Naive thymus-derived CD4-positive, alpha-beta T cell (primary cell): ENCODE measurements at regions of chr3 and their contacts with region 1.

Region 1: GRCh38 chr3:72756900-72757299 is 91.3 kb downstream of the SHQ1 start:
- DNase-seq: peak in 8 of 9 donors; percentile 24 to 87 (median 83)
- ATAC-seq: peak; percentile 98
- H3K4me3 ChIP-seq: peak overlapping the region; percentile 37
- H3K4me3 Mint-ChIP-seq: peak overlapping the region; percentile 51 to 84 (median 76)
- H3K27ac ChIP-seq: peak overlapping the region; percentile 68
- H3K27ac Mint-ChIP-seq: peak overlapping the region; percentile 86 to 99 (median 97)
- H3K4me1 ChIP-seq: peaks cover 17 to 49% of the 10 kb centered on the region in 2 donors
- H3K4me1 Mint-ChIP-seq: peaks cover 28 to 89% (median 80%) of the 10 kb centered on the region in 7 donors
- H3K27me3 ChIP-seq: no peaks in the 10 kb centered on the region
- H3K27me3 Mint-ChIP-seq: no peaks in the 10 kb centered on the region

Region 2: DNA sequence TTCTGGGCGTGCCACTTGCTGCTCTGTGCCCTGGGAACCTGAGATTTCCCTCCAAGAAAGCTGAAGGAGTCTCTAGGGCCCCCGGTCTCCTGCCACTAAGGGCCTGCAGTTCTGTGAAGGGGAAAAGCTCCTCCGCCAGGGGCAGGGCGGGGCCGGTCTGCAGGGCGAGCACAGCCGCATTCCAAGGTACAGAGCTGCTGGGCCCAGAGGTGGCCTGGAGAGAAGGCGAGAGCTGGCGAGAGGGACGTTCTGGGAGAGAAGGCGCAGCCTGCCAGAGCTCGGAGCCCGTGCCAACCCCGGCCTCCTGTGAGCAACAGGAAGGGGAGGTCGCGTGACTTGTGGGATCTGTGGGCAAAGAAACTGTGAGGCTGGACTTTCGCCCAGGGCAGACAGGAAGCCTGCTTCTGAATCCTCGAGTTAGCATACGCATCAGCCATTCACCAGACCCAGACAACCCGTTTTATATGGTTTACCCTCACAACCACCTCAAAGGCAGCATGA is 409.0 kb before region 1 on chr3:
- CTCF ChIA-PET with region 1: no interaction called
- POLR2A ChIA-PET with region 1: no interaction called
- intact Hi-C with region 1: loop called in 1 of 2 experiments (anchors 10 kb)
- DNase-seq: peak in 5 of 9 donors; percentile 37 to 44 (median 41)
- ATAC-seq: peak; percentile 44
- H3K4me3 ChIP-seq: no peak overlapping the region
- H3K4me3 Mint-ChIP-seq: peak overlapping the region in 7 of 10 donors; percentile 11 to 71 (median 60)
- H3K27ac ChIP-seq: peak overlapping the region; percentile 22
- H3K27ac Mint-ChIP-seq: peak overlapping the region in 8 of 9 donors; percentile 70 to 90 (median 86)
- H3K4me1 ChIP-seq: peaks cover 3 to 63% of the 10 kb centered on the region in 2 donors
- H3K4me1 Mint-ChIP-seq: peaks cover 37 to 69% (median 64%) of the 10 kb centered on the region in 7 donors
- H3K27me3 ChIP-seq: no peaks in the 10 kb centered on the region
- H3K27me3 Mint-ChIP-seq: peaks cover 0 to 12% (median 0%) of the 10 kb centered on the region in 5 donors

Region 3: DNA sequence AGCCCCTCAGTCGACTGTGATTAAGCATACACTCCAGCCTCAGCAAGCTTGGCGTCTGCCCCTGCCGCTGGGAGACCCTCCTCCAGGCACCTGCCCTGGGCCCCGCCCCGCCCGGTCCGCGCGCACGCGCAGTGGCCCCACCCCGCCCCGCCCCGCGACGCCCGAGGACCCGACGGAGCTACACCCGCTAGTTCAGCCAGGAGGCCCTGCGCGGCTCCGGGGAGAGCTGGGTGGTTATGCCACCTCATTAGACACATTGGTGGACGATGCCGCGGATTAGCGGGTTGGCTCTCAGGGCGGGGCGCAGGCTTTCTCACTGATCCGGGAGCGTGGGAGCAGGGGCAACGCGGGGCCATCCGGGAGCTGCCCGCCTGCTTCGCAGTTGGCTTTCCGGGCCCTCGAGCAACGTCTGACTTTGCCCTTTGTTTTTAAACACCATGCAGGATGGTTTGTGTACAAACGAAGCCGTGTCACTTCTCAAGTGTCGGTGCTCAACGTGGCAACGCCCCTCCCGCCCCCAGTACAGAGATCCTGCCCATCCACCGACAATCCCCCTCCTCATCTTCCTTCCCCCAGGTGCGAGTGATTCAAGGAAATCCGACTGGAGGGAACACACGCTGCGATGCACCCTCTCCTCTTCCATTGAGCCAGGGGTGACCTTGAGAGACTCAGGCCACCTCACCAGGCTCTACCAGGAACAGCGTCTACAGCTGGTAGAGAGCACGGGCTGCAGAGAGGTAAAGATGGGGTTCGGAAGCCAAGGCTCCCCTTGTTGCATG is 18.0 kb before region 1 on chr3:
- CTCF ChIA-PET with region 1: interaction called, 15 read pairs
- POLR2A ChIA-PET with region 1: interaction called, 226 read pairs
- intact Hi-C with region 1: loop called (anchors 1 kb)
- DNase-seq: peak; percentile 68 to 84 (median 76)
- ATAC-seq: peak; percentile 93
- H3K4me3 ChIP-seq: peak overlapping the region; percentile 80
- H3K4me3 Mint-ChIP-seq: peak overlapping the region; percentile 81 to 96 (median 94)
- H3K27ac ChIP-seq: peak overlapping the region; percentile 81
- H3K27ac Mint-ChIP-seq: peak overlapping the region; percentile 89 to 99 (median 97)
- H3K4me1 ChIP-seq: peaks cover 4 to 21% of the 10 kb centered on the region in 2 donors
- H3K4me1 Mint-ChIP-seq: peaks cover 15 to 35% (median 32%) of the 10 kb centered on the region in 7 donors
- H3K27me3 ChIP-seq: no peaks in the 10 kb centered on the region
- H3K27me3 Mint-ChIP-seq: peaks cover 0 to 3% (median 0%) of the 10 kb centered on the region in 5 donors

Region 4: DNA sequence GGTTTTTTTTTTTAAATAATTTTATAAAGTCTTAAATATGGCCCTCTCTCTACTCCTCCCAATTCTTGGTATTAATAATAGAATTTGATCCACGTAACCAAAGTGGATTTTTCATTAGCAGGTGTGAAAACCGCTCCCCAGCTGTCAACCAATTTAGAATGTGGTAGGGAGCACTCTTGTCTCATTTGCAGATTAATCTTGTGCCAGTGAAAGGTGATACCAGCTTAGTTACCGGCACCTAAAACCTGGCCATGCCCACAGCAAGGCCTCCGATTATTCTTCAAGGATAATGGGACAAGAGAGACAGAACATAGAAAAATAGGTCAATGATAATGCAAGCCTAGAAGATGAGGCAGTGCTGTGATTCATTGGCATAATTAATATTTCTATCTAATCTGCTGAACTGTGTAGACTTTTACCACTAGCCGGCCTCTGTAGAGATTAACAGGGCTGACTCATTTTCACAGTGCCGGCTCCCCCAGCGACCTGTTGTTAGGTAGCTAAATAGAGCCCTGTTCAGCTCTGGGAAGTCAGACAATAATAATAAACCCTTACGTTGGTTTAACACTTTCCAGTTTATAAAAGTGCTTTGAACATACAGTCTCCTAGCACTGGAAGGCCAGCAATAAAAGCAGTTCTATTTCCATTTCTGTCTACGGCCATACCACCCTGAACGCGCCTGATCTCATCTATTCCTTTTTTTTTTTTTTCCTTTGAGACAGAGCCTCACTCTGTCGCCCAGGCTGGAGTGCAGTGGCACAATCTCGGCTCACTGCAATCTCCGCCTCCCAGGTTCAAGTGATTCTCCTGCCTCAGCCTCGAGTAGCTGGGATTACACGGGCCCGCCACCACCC is 11.5 kb before region 1 on chr3:
- CTCF ChIA-PET with region 1: interaction called, 3 read pairs
- POLR2A ChIA-PET with region 1: interaction called, 226 read pairs
- intact Hi-C with region 1: loop called in 1 of 2 experiments (anchors 1 kb)
- DNase-seq: no peak
- ATAC-seq: no peak
- H3K4me3 ChIP-seq: no peak overlapping the region
- H3K4me3 Mint-ChIP-seq: no peak overlapping the region
- H3K27ac ChIP-seq: no peak overlapping the region
- H3K27ac Mint-ChIP-seq: peak overlapping the region in 1 of 9 donors; percentile 68
- H3K4me1 ChIP-seq: peaks cover 0 to 31% of the 10 kb centered on the region in 2 donors
- H3K4me1 Mint-ChIP-seq: peaks cover 10 to 57% (median 48%) of the 10 kb centered on the region in 7 donors
- H3K27me3 ChIP-seq: no peaks in the 10 kb centered on the region
- H3K27me3 Mint-ChIP-seq: no peaks in the 10 kb centered on the region